ENCODE measurements at regions of chr13 and their contacts with region 1.

Region 1: DNA sequence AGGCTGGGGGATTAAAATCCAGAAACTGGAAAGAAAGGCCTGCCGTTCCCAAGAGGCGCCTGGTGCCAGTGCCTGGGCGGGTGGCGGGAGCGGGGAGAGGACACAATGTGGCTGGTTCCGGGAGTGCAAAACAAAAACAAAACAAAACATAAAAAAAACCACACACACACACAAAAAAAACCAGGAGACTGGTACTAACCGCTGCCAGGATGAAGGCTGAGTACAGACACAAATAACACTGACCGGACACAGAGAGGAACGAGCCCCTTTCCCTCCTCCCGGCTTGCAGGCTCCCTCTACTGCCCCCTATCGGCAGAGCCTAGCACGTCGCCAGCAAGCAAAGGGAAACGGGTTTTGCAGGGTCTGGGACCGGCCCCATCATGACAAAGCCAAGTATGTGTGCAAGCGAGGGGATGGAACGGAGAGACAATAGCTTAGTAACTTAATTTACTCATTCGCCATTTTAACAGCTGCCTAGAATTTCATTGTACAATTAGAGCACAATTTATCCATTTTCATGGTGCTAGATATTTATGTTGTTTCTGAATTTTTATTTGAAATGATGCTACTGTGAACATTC is 17.9 kb upstream of the ZDHHC20 start:
- ATAC-seq: peak; percentile 66 to 93 (median 84)
- H3K4me3 ChIP-seq: peak overlapping the region in 2 of 5 donors; percentile 16 to 21
- H3K27ac ChIP-seq: no peak overlapping the region
- H3K4me1 ChIP-seq: peaks cover 0 to 3% of the 10 kb centered on the region in 2 donors

Region 2: DNA sequence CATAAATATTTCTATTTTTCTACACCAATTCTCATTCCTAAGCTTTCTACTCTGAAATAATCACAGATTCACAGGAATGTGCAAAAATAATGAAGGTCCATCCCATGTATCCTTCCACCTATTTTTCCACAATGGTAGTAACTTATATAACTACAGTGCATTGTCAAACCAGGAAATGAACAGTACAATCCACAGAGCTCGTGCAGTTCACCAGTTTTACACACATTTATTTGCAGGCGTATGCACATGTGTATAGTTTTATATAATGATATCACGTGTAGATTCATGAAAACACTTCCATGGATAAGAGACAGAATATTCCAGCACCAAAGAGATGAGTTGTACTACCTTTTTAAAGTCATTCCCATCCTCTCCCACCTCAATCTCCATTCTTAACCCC is 716.1 kb before region 1 on chr13:
- in situ Hi-C with region 1: no loop called
- ATAC-seq: no peak
- H3K4me3 ChIP-seq: no peak overlapping the region
- H3K27ac ChIP-seq: no peak overlapping the region
- H3K4me1 ChIP-seq: no peaks in the 10 kb centered on the region

Region 3: DNA sequence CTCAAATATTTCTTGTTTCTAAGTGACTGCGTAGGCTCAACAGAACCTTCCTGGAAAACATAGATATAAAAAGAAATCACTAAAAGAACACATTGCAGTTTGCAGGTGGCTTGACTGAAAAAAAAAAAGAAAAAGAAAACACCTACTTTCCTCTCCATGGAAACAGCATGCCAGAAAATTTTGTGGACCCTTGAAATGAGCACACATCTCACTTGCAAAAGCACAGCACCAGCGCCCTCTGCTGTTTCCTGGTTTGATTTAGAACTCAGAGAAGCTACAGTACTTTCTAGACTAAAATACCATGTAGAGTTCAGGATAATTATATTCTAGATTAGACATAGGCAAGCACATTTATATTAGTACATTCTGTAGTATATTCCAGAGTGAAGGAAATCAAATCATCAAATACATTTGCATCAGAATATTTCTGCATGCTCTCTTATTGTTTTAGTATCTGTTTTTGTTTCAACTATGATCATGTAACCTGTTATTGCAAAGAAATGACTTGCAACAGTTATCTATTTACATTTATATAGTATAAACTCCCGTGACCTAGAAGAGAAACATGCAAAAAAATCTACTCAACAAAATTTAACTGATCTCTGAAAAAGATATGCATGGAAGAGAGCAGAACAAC is 552.1 kb before region 1 on chr13:
- in situ Hi-C with region 1: loop called in 5 of 9 experiments (anchors 25 kb)
- ATAC-seq: peak; percentile 44 to 91 (median 66)
- H3K4me3 ChIP-seq: no peak overlapping the region
- H3K27ac ChIP-seq: no peak overlapping the region
- H3K4me1 ChIP-seq: no peaks in the 10 kb centered on the region

Region 4: DNA sequence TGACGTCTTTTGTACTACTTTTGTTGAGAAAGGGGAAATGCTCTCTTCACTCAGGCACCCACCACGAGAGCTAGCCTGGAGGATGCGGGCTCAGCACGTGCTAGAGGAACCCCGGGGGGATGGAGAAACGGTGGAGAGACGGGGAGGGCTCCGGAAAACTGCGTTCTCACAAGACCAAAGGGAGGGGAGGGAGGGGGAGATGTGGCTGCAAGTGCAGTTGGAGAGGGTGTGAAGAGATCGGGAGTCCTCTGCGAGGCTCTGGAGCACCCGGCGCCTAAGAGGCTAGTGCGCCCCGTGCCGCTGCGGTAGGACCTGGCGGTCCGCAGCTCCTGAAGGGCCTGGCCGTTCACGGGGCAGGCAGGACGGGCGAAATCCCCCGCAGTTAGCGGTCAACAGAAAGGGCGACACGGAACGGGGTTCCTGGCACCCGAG is 531.0 kb before region 1 on chr13:
- in situ Hi-C with region 1: loop called in 7 of 9 experiments (anchors 10 to 25 kb)
- ATAC-seq: peak in 3 of 8 experiments; percentile 22 to 36 (median 23)
- H3K4me3 ChIP-seq: no peak overlapping the region
- H3K27ac ChIP-seq: no peak overlapping the region
- H3K4me1 ChIP-seq: no peaks in the 10 kb centered on the region

Region 5: GRCh38 chr13:20969182-20969581 is 507.8 kb before region 1 on chr13:
- in situ Hi-C with region 1: loop called in 1 of 9 experiments (anchors 25 kb)
- ATAC-seq: peak in 2 of 8 experiments; percentile 76 to 90
- H3K4me3 ChIP-seq: no peak overlapping the region
- H3K27ac ChIP-seq: no peak overlapping the region
- H3K4me1 ChIP-seq: no peaks in the 10 kb centered on the region

Region 6: GRCh38 chr13:21124852-21125251 is 352.1 kb before region 1 on chr13:
- in situ Hi-C with region 1: loop called in 1 of 9 experiments (anchors 25 kb)
- ATAC-seq: peak in 6 of 8 experiments; percentile 59 to 100 (median 100)
- H3K4me3 ChIP-seq: no peak overlapping the region
- H3K27ac ChIP-seq: no peak overlapping the region
- H3K4me1 ChIP-seq: no peaks in the 10 kb centered on the region

Region 7: DNA sequence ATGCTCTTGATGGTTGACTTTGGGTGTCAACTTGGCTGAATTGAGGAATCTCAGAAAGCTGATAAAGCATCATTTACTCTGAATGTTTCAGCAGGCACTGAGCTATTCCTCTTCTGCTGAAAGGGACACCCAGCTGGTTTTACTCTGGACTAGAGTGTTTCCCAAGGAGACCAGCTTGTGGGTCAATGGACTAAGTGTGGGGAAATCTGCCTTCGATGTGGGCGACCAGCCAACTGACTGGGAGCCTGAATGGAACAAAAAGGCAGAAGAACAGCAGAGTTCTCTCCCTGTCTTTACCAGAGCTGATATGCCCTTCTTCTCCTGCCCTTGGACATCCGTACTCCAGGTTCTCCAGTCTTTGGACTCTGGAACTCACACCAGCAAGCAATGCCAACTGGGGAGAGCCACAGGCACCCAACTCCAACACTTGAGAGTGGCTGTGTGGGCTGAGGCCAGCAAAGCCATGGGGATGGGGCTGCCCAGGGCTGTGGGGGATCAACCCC is 268.3 kb before region 1 on chr13:
- in situ Hi-C with region 1: no loop called
- ATAC-seq: no peak
- H3K4me3 ChIP-seq: no peak overlapping the region
- H3K27ac ChIP-seq: no peak overlapping the region
- H3K4me1 ChIP-seq: no peaks in the 10 kb centered on the region

Region 8: GRCh38 chr13:21567714-21568113 is 90.7 kb after region 1 on chr13:
- in situ Hi-C with region 1: no loop called
- ATAC-seq: no peak
- H3K4me3 ChIP-seq: no peak overlapping the region
- H3K27ac ChIP-seq: no peak overlapping the region
- H3K4me1 ChIP-seq: no peaks in the 10 kb centered on the region